Right cardiac atrium (tissue), 5 donors: ENCODE measurements at regions of chr5 and their contacts with region 1.

Region 1: DNA sequence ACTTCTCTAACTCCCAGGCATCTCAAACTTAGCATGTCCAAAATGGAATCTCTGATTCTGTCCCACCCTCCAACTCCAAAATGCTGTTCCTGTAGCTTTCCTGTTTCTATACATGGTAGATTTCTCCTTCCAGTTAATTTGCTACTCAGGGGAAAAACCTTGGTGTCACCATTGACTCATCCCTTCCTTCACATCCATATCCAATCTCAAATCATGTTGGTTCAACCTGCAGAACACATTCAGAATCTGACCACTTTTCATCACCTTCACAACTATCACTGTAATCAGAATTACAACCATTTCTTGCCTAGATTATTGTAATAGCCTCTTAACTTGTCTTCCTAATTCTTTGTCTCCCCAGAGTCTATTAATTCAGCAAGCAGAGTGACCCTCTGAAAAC is 10.8 kb downstream of the RIOK2 start:
- DNase-seq: no peak
- ATAC-seq: no peak
- H3K4me3 ChIP-seq: no peak overlapping the region
- H3K27ac ChIP-seq: no peak overlapping the region
- H3K4me1 ChIP-seq: no peaks in the 10 kb centered on the region
- H3K27me3 ChIP-seq: no peaks in the 10 kb centered on the region

Region 2: GRCh38 chr5:96776621-96777020 is 395.6 kb before region 1 on chr5:
- intact Hi-C with region 1: loop called in 1 of 4 experiments (anchors 10 kb)
- DNase-seq: no peak
- ATAC-seq: no peak
- H3K4me3 ChIP-seq: no peak overlapping the region
- H3K27ac ChIP-seq: no peak overlapping the region
- H3K4me1 ChIP-seq: no peaks in the 10 kb centered on the region
- H3K27me3 ChIP-seq: no peaks in the 10 kb centered on the region